ENCODE measurements at regions of chr9 and their contacts with region 1.

Region 1: DNA sequence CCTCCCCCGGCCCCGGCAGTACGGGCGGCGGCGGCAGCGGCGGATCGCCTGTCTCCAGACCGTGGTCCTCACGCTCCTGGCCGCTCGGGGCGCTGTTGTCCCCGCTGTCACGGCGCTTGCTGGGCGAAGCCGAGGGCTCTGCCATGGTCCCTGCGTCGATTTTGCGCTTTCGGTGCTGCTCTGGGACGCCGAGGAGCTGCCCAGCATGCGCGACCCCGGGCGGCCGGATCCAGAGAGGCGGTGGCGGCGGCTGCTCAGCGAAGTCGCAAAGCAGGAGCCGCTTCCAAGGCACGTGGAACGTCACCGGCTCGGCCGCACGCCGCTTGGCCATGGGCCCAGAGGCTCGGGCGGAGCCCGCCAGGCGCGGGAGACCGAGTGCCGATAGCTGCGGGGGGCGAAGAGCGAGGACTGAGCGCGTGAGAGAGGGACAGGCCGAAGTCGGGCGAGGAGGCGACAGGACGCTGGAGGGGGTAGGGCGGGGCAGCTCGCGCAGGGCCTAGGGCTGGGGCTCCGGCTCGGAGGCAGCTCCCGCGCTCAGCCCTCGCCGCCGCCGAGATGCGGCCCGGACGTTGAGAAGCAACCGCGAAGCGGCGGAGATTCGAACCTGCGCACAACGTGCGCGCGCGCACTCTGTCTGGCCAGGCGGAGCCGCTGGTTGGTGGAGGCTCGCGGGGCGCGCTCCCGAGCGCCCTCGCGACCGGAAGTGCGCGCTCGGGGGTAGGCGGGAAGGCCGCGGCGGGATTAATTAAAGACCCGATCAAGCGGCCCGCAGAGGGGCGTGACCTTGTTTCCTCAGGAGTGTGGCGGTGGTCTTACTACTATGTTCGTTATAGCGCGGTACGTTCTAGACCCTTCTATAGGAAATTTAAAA is at the start of gene C9orf40:
- DNase-seq: peak; percentile 93
- H3K4me3 ChIP-seq: peak within 1 kb of the TSS; percentile 62 to 98 (median 90)
- H3K27ac ChIP-seq: peak within 1 kb of the TSS; percentile 93 to 97 (median 94)
- H3K4me1 ChIP-seq: peaks cover 0 to 7% (median 4%) of the 10 kb centered on the region in 4 donors
- H3K27me3 ChIP-seq: no peaks in the 10 kb centered on the region
- CTCF ChIP-seq: peak in 3 of 4 experiments; percentile 65 to 88 (median 68)
- EP300 ChIP-seq: no peak
- POLR2A ChIP-seq: peak; percentile 22 to 24
- total RNA-seq, gene C9orf40: 4.9 to 7.5 (median 5.9) TPM

Region 2: DNA sequence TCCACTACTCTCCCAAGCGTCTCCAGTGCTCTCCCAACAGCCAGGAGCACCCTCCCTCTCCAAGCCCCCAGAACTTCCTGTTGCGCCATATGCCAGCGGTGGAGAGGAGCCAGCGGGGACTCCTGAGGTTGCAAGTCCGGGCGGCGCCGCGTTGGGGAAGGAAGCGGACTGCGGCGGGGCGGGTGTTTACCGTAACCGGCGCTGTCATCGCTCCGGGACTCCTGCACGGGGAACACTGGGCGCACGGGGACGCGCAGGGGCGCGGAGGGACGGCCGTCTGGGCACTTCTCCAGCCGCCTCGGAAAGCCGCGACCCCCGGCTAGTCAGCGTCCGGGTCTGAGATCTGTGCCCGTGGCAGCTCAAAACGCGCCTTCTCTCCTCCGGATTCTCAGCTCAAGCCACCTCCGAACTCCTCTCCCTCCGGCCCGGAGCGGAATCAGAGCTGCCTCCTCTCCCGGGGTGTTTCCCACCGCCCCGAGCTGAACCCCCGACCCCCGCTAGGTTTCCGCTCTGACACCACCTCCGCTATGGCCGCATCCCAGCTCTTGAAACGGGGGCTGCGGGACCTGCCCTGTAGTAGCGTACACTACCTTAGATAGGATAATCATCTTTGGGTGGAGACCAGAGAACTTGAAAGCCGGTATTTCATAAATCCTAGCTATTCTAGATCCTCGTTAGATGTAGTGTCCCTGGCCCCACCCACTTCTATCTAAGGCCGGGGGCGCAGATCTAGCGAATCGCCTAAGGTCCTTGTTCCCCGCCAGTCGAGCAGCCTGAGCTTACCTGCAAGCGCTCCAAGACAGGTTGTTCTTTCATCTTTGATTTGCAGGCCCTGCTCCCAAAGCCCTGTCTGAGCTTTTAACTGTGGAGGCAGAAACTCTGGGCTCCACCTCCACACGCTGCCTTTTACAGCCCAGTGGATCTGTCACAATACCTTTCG is 65.2 kb before region 1 on chr9 and contains the start of gene TRPM6:
- intact Hi-C with region 1: loop called (anchors 1 kb)
- DNase-seq: peak; percentile 89
- H3K4me3 ChIP-seq: peak within 1 kb of the TSS; percentile 38 to 66 (median 60)
- H3K27ac ChIP-seq: peak within 1 kb of the TSS; percentile 53 to 64 (median 59)
- H3K4me1 ChIP-seq: peaks cover 0 to 14% (median 6%) of the 10 kb centered on the region in 4 donors
- H3K27me3 ChIP-seq: no peaks in the 10 kb centered on the region
- CTCF ChIP-seq: no peak
- EP300 ChIP-seq: peak in 1 of 4 donors; percentile 33
- POLR2A ChIP-seq: no peak
- total RNA-seq, gene TRPM6: 0.41 to 1.8 TPM in 2 of 4 donors, not detected in the others

Region 3: DNA sequence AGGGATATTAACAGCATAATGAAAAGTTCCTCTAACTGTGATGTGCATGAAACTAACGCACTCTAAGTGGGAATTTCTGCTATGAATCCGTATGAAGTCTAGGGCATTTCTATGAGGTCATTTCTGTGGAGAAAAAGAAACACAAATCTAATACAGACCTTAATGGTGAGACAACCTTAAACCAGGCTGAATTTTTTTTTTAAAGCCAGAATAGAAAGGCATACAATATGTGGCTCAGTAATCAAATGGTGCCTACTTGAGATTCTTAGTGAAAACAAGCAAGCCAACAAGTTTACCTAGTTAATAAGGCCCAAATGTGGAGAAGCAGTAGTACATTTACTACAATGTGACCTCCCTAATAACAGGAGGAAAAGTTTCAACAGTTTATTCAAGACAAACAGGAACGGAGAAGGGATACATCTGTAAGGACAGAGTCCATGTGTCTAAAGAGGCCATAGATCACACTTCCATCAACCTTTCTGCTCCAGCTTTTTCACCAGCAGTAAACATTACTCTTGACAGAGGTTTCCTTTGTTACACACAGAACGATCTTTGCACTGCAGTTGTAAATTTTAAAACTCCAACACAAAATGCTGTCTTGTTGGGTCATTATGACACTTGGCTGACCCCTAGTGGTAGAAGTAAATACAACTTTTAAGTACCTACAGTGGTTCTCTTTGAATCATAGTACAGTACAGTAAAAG is 49.4 kb after region 1 on chr9:
- intact Hi-C with region 1: loop called (anchors 2 kb)
- DNase-seq: no peak
- H3K4me3 ChIP-seq: no peak overlapping the region
- H3K27ac ChIP-seq: no peak overlapping the region
- H3K4me1 ChIP-seq: peaks cover 0 to 5% (median 2%) of the 10 kb centered on the region in 4 donors
- H3K27me3 ChIP-seq: no peaks in the 10 kb centered on the region
- CTCF ChIP-seq: peak; percentile 42 to 79 (median 72)
- EP300 ChIP-seq: no peak
- POLR2A ChIP-seq: no peak

Region 4: DNA sequence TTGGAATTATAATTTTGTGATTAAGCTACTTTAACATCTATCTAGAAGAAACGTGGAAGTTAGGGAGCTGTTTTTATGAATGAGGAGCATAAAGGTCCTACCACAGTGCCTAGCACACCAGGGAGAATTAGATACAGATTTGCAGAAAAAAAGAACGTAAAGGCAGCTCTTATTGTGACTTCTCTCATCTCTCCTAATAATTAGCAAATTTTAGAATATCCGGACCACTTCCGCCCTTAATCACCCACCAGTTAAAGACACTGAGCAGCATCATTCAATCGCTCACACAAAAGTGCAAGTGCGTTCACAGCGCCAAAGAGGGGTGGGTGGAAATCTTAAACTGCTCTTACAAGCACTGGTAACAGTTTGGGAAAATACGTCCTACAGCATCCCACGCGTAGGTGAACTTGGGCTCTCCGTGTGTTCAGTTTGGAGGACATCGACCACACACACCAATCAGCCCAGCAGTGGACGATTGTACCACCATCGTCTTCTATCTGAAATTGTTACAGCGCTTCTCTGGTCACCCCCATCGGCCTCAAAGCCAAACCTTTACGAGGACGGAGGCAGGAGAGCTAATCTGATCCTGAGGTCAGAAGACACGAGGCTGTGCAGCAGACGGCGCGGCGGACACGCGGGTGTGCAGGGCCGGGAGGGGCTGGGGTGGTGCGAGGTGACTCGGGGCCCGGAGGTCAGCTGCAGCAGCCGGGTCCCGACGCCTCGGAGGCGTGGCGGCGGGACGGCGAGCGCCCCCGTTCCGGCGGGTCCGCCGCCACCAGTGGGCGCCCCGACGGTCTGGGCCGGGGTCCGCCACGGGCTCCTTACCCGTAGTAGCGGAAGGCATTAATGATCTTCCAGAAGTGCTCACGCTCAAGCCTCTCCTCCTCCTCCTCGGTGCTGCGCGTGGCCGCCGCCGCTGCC is 74.9 kb after region 1 on chr9:
- intact Hi-C with region 1: loop called (anchors 2 kb)
- DNase-seq: peak; percentile 86
- H3K4me3 ChIP-seq: peak overlapping the region; percentile 52 to 91 (median 71)
- H3K27ac ChIP-seq: peak overlapping the region; percentile 93 to 97 (median 94)
- H3K4me1 ChIP-seq: peaks cover 0 to 27% (median 14%) of the 10 kb centered on the region in 4 donors
- H3K27me3 ChIP-seq: no peaks in the 10 kb centered on the region
- CTCF ChIP-seq: peak in 1 of 4 experiments; percentile 14
- EP300 ChIP-seq: no peak
- POLR2A ChIP-seq: no peak

Region 5: GRCh38 chr9:75088260-75088905 is 135.9 kb after region 1 on chr9 and contains the start of gene OSTF1:
- intact Hi-C with region 1: loop called (anchors 5 kb)
- DNase-seq: peak; percentile 97
- H3K4me3 ChIP-seq: peak within 1 kb of the TSS; percentile 87 to 97 (median 96)
- H3K27ac ChIP-seq: peak within 1 kb of the TSS; percentile 92 to 98 (median 94)
- H3K4me1 ChIP-seq: peaks cover 0 to 18% (median 5%) of the 10 kb centered on the region in 4 donors
- H3K27me3 ChIP-seq: no peaks in the 10 kb centered on the region
- CTCF ChIP-seq: no peak
- EP300 ChIP-seq: no peak
- POLR2A ChIP-seq: peak; percentile 88 to 89
- total RNA-seq, gene OSTF1: 11.0 to 20.7 (median 17.2) TPM